ENCODE measurements at regions of chr15 and their contacts with region 1.

Region 1: DNA sequence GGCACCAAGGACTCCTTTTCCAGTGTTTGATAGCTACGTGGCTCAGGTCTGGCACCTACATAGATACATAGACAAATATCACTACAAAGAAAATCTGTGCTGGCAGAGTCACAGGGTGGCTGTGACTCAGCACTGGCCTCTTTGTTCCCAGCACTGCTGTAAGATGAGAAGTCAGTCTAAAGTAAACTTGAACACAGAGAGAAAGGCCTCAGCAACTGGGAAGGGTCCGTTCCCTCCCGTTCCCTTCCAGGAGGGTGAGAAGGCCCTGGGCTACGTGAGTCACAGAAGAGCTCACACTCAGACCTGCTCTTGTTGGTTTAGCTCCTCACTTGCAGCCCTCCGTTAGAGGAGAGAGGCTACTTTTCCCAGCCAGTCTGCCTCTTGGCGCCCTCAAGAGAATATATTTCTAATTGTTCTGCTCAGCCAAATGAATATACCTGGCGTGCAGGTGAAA is 23.1 kb downstream of the ANXA2 start:
- DNase-seq: peak; percentile 98
- H3K4me3 ChIP-seq: no peak overlapping the region
- H3K27ac ChIP-seq: peak overlapping the region; percentile 98
- H3K4me1 ChIP-seq: peaks cover 85% of the 10 kb centered on the region
- H3K27me3 ChIP-seq: no peaks in the 10 kb centered on the region
- CTCF ChIP-seq: no peak
- POLR2A ChIP-seq: peak; percentile 72

Region 2: GRCh38 chr15:60362321-60363086 is 12.2 kb before region 1 on chr15:
- CTCF ChIA-PET with region 1: interaction called, 68 read pairs
- POLR2A ChIA-PET with region 1: interaction called, 5 read pairs
- dilution Hi-C with region 1: no loop called
- intact Hi-C with region 1: loop called (anchors 1 kb)
- DNase-seq: no peak
- H3K4me3 ChIP-seq: no peak overlapping the region
- H3K27ac ChIP-seq: peak overlapping the region; percentile 23
- H3K4me1 ChIP-seq: peaks cover 46% of the 10 kb centered on the region
- H3K27me3 ChIP-seq: no peaks in the 10 kb centered on the region
- CTCF ChIP-seq: no peak
- POLR2A ChIP-seq: no peak

Region 3: DNA sequence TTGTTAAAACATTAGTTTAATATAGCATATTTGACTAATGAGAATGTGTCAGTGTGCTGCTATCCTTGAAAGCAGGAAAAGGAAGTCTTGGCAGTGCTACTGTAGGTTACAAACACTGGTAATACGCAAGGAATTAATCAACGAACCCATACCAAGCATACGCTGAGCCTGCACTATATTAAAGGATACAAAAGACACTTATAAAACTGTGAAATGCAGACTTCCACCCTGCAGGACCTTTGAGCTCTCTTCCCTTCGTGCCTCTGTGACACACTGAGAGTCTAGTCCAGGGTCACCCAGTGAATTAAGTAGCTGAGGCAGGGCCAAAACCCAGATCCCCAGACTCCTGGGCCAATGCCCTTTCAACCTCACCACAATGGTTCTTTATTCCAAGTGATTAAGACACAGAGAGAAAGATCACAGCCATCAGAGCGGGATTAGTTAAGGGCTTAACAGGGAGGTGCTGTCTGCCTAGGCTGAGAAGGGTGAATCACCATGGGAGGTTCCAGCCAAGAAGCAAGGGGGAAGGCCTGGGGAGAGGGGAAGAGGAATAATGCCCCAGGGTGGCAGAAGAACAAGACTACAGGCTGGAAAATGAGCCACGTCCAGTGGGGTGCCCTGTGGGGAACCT is 16.3 kb after region 1 on chr15:
- CTCF ChIA-PET with region 1: interaction called, 17 read pairs
- POLR2A ChIA-PET with region 1: interaction called, 27 read pairs
- dilution Hi-C with region 1: no loop called
- intact Hi-C with region 1: loop called (anchors 1 kb)
- DNase-seq: peak; percentile 87
- H3K4me3 ChIP-seq: peak overlapping the region in 1 of 3 experiments; percentile 96
- H3K27ac ChIP-seq: peak overlapping the region; percentile 97
- H3K4me1 ChIP-seq: peaks cover 88% of the 10 kb centered on the region
- H3K27me3 ChIP-seq: no peaks in the 10 kb centered on the region
- CTCF ChIP-seq: no peak
- POLR2A ChIP-seq: no peak

Region 4: GRCh38 chr15:60423537-60423936 is 48.9 kb after region 1 on chr15:
- CTCF ChIA-PET with region 1: interaction called, 3 read pairs
- POLR2A ChIA-PET with region 1: no interaction called
- dilution Hi-C with region 1: no loop called
- intact Hi-C with region 1: loop called (anchors 2 kb)
- DNase-seq: peak; percentile 64
- H3K4me3 ChIP-seq: no peak overlapping the region
- H3K27ac ChIP-seq: peak overlapping the region; percentile 32
- H3K4me1 ChIP-seq: peaks cover 45% of the 10 kb centered on the region
- H3K27me3 ChIP-seq: no peaks in the 10 kb centered on the region
- CTCF ChIP-seq: no peak
- POLR2A ChIP-seq: no peak

Region 5: DNA sequence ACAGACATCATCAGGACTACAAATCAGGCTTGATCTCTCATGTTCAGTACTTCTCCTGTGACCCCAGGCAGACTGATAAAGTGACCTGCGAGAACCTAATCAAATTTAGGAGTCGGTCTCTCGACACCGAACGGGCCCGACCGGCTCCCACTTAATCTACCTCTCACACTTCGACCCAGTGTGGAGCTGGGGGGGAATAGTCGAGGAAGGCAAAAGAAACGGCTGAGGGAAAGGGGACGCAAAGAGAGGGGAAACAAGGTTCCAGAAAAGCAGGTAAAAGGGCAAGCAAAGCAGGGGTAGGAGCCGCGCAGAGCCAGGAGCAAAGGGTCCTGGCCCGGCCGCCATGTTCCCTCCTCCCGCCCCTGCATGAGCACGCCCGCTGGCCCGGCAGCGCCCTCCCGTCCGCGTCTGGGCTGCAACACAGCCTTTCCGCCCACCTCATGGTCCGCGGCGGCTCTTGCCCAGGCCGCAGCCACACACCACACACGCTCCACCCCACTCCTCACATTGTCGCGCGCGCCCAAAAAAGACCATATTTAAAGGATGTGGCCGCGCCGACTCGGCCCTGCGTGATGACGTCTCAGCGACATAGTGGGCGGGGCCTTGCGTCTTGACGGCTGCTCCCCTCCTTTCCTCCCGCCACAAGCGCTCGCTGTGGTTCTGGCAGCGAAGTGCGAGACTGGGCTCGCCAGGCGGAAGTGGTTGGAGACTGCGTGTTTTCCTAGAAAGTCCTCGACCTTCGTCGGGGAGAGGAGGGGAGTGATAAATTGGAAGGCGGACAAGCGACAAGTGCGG is 104.1 kb after region 1 on chr15 and contains the start of gene ICE2:
- CTCF ChIA-PET with region 1: no interaction called
- POLR2A ChIA-PET with region 1: no interaction called
- dilution Hi-C with region 1: no loop called
- intact Hi-C with region 1: loop called (anchors 2 kb)
- DNase-seq: peak; percentile 97
- H3K4me3 ChIP-seq: peak within 1 kb of the TSS; percentile 69 to 94 (median 77)
- H3K27ac ChIP-seq: peak within 1 kb of the TSS; percentile 89
- H3K4me1 ChIP-seq: peaks cover 26% of the 10 kb centered on the region
- H3K27me3 ChIP-seq: no peaks in the 10 kb centered on the region
- CTCF ChIP-seq: no peak
- POLR2A ChIP-seq: peak; percentile 98
- total RNA-seq, gene ICE2: 50.9 and 57.0 TPM in 2 replicates